Gastrocnemius medialis (tissue), 4 donors: ENCODE measurements at regions of chr5 and their contacts with region 1.

Region 1: GRCh38 chr5:79857714-79858409 is 133.2 kb downstream of the MTX3 start:
- DNase-seq: peak in 1 of 2 donors; percentile 66
- ATAC-seq: peak; percentile 14 to 72
- H3K4me3 ChIP-seq: no peak overlapping the region
- H3K27ac ChIP-seq: no peak overlapping the region
- H3K4me1 ChIP-seq: peaks cover 10 to 17% of the 10 kb centered on the region in 2 donors
- H3K27me3 ChIP-seq: no peaks in the 10 kb centered on the region
- CTCF ChIP-seq: peak; percentile 75 to 96 (median 92)
- POLR2A ChIP-seq: no peak

Region 2: GRCh38 chr5:79560771-79561524 is 296.9 kb before region 1 on chr5:
- in situ Hi-C with region 1: loop called in 1 of 4 experiments (anchors 5 kb)
- intact Hi-C with region 1: no loop called
- DNase-seq: no peak
- ATAC-seq: peak; percentile 78 to 87
- H3K4me3 ChIP-seq: no peak overlapping the region
- H3K27ac ChIP-seq: peak overlapping the region in 3 of 4 donors; percentile 8 to 25 (median 23)
- H3K4me1 ChIP-seq: peaks cover 16 to 24% of the 10 kb centered on the region in 2 donors
- H3K27me3 ChIP-seq: no peaks in the 10 kb centered on the region
- CTCF ChIP-seq: no peak
- POLR2A ChIP-seq: no peak

Region 3: DNA sequence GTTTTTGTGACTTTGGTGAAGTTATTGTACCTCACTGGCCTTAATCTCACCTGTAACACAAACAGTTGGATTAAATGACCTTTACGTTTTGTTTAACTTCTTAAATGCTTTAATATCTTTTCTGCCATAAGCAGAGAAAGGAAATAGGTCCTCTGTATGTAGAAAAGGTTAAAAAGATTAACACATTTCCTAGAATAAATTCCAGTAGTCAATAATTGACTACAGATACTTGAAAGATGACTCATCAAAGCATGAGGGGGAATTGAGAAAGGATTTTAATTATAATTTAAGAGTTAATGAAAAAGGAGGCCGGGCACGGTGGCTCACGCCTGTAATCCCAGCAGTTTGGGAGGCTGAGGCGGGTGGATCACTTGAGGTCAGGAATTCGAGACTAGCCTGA is 204.0 kb before region 1 on chr5:
- in situ Hi-C with region 1: no loop called
- intact Hi-C with region 1: no loop called
- DNase-seq: no peak
- ATAC-seq: no peak
- H3K4me3 ChIP-seq: no peak overlapping the region
- H3K27ac ChIP-seq: peak overlapping the region in 1 of 4 donors; percentile 28
- H3K4me1 ChIP-seq: peaks cover 7 to 19% of the 10 kb centered on the region in 2 donors
- H3K27me3 ChIP-seq: no peaks in the 10 kb centered on the region
- CTCF ChIP-seq: no peak
- POLR2A ChIP-seq: no peak

Region 4: DNA sequence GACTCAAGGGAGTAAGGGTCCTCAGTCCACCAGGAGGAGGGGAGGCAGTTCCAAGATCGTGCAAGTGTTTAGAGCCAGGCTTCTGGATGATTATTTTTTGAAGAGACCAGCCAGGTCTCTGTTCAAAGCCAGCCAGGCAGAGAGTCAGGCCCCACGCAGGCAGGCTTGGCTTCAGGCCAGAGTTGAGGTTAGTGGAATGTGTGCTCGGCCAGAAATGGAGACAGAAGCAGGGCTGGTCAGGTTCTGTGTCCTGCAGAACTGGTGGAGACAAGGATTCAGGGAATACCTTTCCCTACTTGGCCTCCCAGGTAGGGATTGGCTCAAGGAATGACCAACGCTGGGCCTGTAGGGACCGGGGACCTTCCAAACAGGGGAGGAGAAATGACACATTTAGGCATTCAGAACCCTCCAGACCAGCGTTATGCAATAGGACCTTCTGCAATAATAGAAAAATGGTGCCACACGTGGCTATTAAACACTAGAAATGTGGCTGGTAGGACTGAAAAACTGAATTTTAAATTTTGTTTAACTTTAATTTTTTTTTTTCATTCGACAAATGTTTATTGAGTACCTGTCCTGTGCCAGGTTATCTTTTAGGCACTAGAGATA is 62.0 kb before region 1 on chr5:
- in situ Hi-C with region 1: no loop called
- intact Hi-C with region 1: loop called (anchors 5 kb)
- DNase-seq: peak; percentile 23 to 61
- ATAC-seq: peak; percentile 6 to 31
- H3K4me3 ChIP-seq: no peak overlapping the region
- H3K27ac ChIP-seq: peak overlapping the region; percentile 22 to 86 (median 83)
- H3K4me1 ChIP-seq: peaks cover 50 to 56% of the 10 kb centered on the region in 2 donors
- H3K27me3 ChIP-seq: no peaks in the 10 kb centered on the region
- CTCF ChIP-seq: no peak
- POLR2A ChIP-seq: no peak

Region 5: GRCh38 chr5:79878721-79879336 is 21.0 kb after region 1 on chr5:
- in situ Hi-C with region 1: no loop called
- intact Hi-C with region 1: no loop called
- DNase-seq: no peak
- ATAC-seq: no peak
- H3K4me3 ChIP-seq: no peak overlapping the region
- H3K27ac ChIP-seq: no peak overlapping the region
- H3K4me1 ChIP-seq: peaks cover 0 to 7% of the 10 kb centered on the region in 2 donors
- H3K27me3 ChIP-seq: no peaks in the 10 kb centered on the region
- CTCF ChIP-seq: no peak
- POLR2A ChIP-seq: no peak

Region 6: DNA sequence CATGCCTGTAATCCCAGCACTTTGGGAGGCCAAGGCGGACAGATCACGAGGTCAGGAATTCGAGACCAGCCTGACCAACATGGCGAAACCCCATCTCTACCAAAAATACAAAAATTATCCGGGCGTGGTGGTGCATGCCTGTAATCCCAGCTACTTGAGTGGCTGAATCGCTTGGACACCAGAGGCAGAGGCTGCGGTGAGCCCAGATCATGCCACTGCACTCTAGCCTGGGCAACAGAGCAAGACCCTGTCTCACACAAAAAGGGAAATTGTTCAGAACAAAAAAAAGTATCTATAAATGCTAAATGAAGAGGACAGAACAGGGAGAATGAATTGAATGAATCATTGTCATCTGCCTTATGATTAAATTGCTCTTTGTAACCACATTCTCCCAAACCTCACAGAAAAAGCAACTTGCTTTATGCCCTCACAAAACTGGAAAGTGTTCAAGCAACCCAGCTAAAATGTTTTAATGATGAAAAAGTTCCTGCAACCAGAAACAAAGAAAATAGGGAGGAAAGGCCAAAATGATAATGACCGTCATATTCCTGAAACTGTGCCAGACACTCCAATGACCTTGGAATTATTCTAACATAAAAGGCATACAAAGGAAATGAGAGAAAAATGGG is 314.3 kb after region 1 on chr5:
- in situ Hi-C with region 1: no loop called
- intact Hi-C with region 1: no loop called
- DNase-seq: no peak
- ATAC-seq: no peak
- H3K4me3 ChIP-seq: no peak overlapping the region
- H3K27ac ChIP-seq: no peak overlapping the region
- H3K4me1 ChIP-seq: no peaks in the 10 kb centered on the region
- H3K27me3 ChIP-seq: no peaks in the 10 kb centered on the region
- CTCF ChIP-seq: no peak
- POLR2A ChIP-seq: no peak